ENCODE measurements at regions of chr1 and their contacts with region 1.

Region 1: DNA sequence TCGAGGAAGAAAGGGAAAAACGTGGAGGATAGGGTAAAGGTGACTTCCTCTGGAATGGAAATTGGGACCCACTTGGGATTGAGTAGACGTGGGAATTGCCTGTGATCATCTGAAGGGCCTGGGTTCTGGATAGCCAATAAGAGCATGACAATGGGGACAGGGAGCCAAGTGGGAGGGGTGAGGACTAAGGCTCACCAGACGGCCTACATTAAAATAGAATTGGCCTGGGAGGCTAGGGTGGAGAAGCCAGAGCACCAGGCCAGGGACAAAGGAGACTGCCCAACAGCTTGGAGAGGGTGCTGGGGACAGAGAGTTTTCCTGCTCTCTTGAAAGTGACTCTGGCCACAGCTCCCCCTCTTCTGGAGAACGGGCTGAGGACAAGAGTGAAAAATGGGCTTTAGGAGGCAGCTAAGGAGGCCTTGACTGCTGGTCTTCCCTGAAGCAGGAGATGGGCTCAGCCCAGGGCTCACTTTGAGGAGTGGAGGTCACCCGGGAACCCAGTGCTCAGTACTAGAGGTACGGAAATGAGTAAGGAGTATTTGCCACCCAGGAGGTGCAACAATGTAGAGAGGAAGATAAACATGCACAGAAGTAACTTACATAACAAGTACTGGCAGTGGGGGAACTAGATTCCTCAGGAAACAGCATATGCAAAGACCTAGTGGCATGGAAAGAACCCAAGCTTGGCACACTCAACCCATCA is 18.8 kb downstream of the INKA2 start:
- DNase-seq: peak; percentile 18
- ATAC-seq: no peak
- H3K4me3 Mint-ChIP-seq: no peak overlapping the region
- H3K27ac Mint-ChIP-seq: peak overlapping the region; percentile 2
- H3K4me1 Mint-ChIP-seq: peaks cover 1% of the 10 kb centered on the region
- H3K27me3 Mint-ChIP-seq: no peaks in the 10 kb centered on the region

Region 2: GRCh38 chr1:111696330-111696729 is 24.1 kb before region 1 on chr1:
- CTCF ChIA-PET with region 1: interaction called, 54 read pairs
- POLR2A ChIA-PET with region 1: no interaction called
- DNase-seq: no peak
- ATAC-seq: no peak
- H3K4me3 Mint-ChIP-seq: no peak overlapping the region
- H3K27ac Mint-ChIP-seq: peak overlapping the region; percentile 31
- H3K4me1 Mint-ChIP-seq: peaks cover 23% of the 10 kb centered on the region
- H3K27me3 Mint-ChIP-seq: no peaks in the 10 kb centered on the region

Region 3: DNA sequence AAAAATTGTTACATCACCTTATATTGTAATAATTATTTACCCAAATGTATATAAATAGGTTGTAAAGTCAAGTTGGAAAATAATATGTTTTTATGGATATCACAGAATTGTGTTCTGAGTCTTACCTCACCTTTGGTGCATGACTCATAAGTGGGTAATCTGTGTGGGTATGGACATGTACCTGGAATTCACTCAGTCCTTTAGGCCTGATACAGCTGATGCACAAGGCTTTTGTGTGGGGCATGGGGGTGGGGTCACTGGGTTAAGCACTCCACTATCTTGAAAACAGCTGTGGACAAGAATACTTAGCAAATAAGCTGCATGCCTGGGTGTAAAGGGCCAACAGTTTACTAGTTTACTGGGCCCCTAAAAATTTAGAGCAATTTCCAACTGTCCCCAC is 15.6 kb before region 1 on chr1:
- CTCF ChIA-PET with region 1: interaction called, 54 read pairs
- POLR2A ChIA-PET with region 1: no interaction called
- DNase-seq: no peak
- ATAC-seq: no peak
- H3K4me3 Mint-ChIP-seq: no peak overlapping the region
- H3K27ac Mint-ChIP-seq: no peak overlapping the region
- H3K4me1 Mint-ChIP-seq: peaks cover 6% of the 10 kb centered on the region
- H3K27me3 Mint-ChIP-seq: no peaks in the 10 kb centered on the region

Region 4: GRCh38 chr1:111739194-111739924 is 18.9 kb after region 1 on chr1 and contains the start of gene INKA2:
- CTCF ChIA-PET with region 1: interaction called, 45 read pairs
- POLR2A ChIA-PET with region 1: interaction called, 5 read pairs
- DNase-seq: peak; percentile 88
- ATAC-seq: peak; percentile 90
- H3K4me3 Mint-ChIP-seq: peak within 1 kb of the TSS; percentile 80
- H3K27ac Mint-ChIP-seq: peak within 1 kb of the TSS; percentile 75
- H3K4me1 Mint-ChIP-seq: peaks cover 21% of the 10 kb centered on the region
- H3K27me3 Mint-ChIP-seq: peaks cover 46% of the 10 kb centered on the region
- total RNA-seq, gene INKA2: 4.1 to 4.3 TPM

Region 5: DNA sequence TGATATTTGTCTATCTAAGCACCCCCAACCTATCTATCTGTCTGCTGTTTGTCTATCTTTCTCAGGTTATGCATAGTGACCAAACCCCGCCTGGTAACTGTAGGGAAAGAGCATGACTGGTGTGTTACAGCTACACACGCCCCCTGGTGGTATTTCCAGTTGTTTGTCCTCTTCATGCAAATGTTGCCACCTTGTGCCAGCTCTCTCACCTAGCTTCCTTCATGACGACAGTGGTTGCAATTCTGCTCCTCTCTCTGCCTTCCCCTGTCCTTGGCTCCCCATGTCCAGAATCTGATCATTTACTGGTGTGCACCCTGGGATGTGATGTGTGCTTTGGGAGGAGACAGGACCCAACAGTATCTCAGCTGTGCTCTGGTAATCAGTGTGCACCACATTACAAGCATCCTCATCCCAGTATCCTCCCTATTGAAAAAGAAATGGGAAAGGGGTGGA is 26.9 kb after region 1 on chr1:
- CTCF ChIA-PET with region 1: interaction called, 48 read pairs
- POLR2A ChIA-PET with region 1: no interaction called
- DNase-seq: peak; percentile 89
- ATAC-seq: peak; percentile 91
- H3K4me3 Mint-ChIP-seq: no peak overlapping the region
- H3K27ac Mint-ChIP-seq: no peak overlapping the region
- H3K4me1 Mint-ChIP-seq: peaks cover 25% of the 10 kb centered on the region
- H3K27me3 Mint-ChIP-seq: peaks cover 17% of the 10 kb centered on the region

Region 6: DNA sequence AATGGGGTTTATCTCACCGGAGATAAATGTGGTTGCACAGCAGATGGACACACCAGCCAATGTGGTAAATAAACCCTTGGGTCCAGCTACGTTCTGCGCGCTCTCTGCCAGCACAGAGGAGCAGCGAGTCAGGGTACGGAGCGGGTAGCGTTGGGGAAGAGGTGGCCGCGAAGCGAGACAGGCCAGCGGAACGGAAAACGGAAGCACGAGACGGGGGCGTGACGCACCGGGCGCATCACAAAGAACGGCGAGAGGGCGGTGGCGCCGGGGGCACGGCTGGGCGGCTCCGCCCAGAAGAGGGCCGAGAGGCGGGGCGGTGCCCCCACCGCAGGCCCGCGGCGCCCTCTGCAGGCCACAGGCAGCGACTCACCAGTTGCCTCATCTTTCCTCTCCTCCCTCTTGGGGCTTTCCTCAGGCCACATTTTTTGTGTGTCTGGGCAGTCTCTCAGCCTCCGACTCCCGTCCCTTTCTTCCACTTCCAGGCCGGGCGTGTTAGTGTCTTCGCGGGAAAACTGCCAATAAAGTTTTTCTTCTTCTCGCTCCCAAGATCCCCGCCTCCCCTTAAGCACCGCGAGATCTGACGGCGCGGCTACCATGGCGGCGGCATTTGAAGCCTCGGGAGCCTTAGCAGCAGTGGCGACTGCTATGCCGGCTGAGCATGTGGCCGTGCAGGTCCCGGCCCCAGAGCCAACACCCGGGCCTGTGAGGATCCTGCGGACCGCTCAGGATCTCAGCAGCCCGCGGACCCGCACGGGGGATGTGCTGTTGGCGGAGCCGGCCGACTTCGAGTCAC is 35.1 kb after region 1 on chr1 and contains the start of gene DDX20:
- CTCF ChIA-PET with region 1: interaction called, 35 read pairs
- POLR2A ChIA-PET with region 1: no interaction called
- DNase-seq: peak; percentile 94
- ATAC-seq: peak; percentile 89
- H3K4me3 Mint-ChIP-seq: peak within 1 kb of the TSS; percentile 93
- H3K27ac Mint-ChIP-seq: peak within 1 kb of the TSS; percentile 99
- H3K4me1 Mint-ChIP-seq: peaks cover 57% of the 10 kb centered on the region
- H3K27me3 Mint-ChIP-seq: no peaks in the 10 kb centered on the region
- total RNA-seq, gene DDX20: 18.1 to 18.9 TPM

Region 7: GRCh38 chr1:111769517-111770146 is 49.2 kb after region 1 on chr1:
- CTCF ChIA-PET with region 1: interaction called, 72 read pairs
- POLR2A ChIA-PET with region 1: no interaction called
- DNase-seq: peak; percentile 64
- ATAC-seq: no peak
- H3K4me3 Mint-ChIP-seq: no peak overlapping the region
- H3K27ac Mint-ChIP-seq: no peak overlapping the region
- H3K4me1 Mint-ChIP-seq: no peaks in the 10 kb centered on the region
- H3K27me3 Mint-ChIP-seq: no peaks in the 10 kb centered on the region

Measured in activated CD8-positive, alpha-beta T cell treated with anti-CD3 and anti-CD28 coated beads, Interleukin-2, amount 10 ng/mL, durations not matched to agents 7 days and 5 days (primary cell).